ENCODE measurements at regions of chr18 and their contacts with region 1.

Region 1: GRCh38 chr18:7452331-7452730 is 114.8 kb upstream of the PTPRM start:
- DNase-seq: no peak
- ATAC-seq: no peak
- H3K4me3 ChIP-seq: no peak overlapping the region
- H3K27ac ChIP-seq: no peak overlapping the region
- H3K4me1 ChIP-seq: no peaks in the 10 kb centered on the region
- H3K27me3 ChIP-seq: no peaks in the 10 kb centered on the region
- CTCF ChIP-seq: peak; percentile 23 to 63 (median 56)
- POLR2A ChIP-seq: no peak

Region 2: DNA sequence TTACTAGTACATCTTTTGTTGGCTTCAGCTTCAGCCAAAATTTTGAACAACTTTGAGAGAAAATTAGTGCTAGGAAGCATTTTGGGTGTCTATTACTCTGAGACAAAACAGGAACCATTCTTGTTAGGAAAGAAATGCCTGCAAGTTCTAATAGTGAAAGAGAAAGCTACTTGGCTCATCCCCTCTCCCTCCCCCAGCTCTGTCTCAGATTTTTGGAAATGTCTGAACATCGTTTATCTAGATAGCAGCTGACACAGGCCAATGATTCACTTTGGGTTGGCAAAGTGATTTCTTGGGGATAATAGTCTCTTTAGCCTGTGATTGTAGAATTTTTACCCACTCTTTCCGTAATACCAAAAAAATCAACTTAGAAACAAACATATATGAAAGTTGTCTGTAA is 72.5 kb after region 1 on chr18:
- in situ Hi-C with region 1: loop called in 1 of 4 experiments (anchors 25 kb)
- intact Hi-C with region 1: no loop called
- DNase-seq: no peak
- ATAC-seq: no peak
- H3K4me3 ChIP-seq: no peak overlapping the region
- H3K27ac ChIP-seq: no peak overlapping the region
- H3K4me1 ChIP-seq: no peaks in the 10 kb centered on the region
- H3K27me3 ChIP-seq: no peaks in the 10 kb centered on the region
- CTCF ChIP-seq: no peak
- POLR2A ChIP-seq: no peak

Region 3: GRCh38 chr18:7727361-7728076 is 275.2 kb after region 1 on chr18:
- in situ Hi-C with region 1: no loop called
- intact Hi-C with region 1: no loop called
- DNase-seq: no peak
- ATAC-seq: no peak
- H3K4me3 ChIP-seq: no peak overlapping the region
- H3K27ac ChIP-seq: no peak overlapping the region
- H3K4me1 ChIP-seq: peaks cover 28 to 41% of the 10 kb centered on the region in 2 donors
- H3K27me3 ChIP-seq: no peaks in the 10 kb centered on the region
- CTCF ChIP-seq: no peak
- POLR2A ChIP-seq: no peak

Region 4: GRCh38 chr18:7812431-7813063 is 360.2 kb after region 1 on chr18:
- in situ Hi-C with region 1: no loop called
- intact Hi-C with region 1: no loop called
- DNase-seq: no peak
- ATAC-seq: peak; percentile 72 to 77
- H3K4me3 ChIP-seq: no peak overlapping the region
- H3K27ac ChIP-seq: peak overlapping the region; percentile 12 to 54 (median 35)
- H3K4me1 ChIP-seq: peaks cover 40 to 42% of the 10 kb centered on the region in 2 donors
- H3K27me3 ChIP-seq: no peaks in the 10 kb centered on the region
- CTCF ChIP-seq: no peak
- POLR2A ChIP-seq: no peak

Measured in gastrocnemius medialis (tissue), 4 donors.